Activated T-helper 2 cell treated with anti-CD3 and anti-CD28 coated beads, Interferon-gamma antibody, Interleukin-2, Interleukin-4, amounts not matched to agents 10 μg/mL and 5 μg/mL and 100 μg/mL, durations not matched to agents 14 hours and 24 hours and 36 hours (primary cell): ENCODE measurements at regions of chr10 and their contacts with region 1.

Region 1: DNA sequence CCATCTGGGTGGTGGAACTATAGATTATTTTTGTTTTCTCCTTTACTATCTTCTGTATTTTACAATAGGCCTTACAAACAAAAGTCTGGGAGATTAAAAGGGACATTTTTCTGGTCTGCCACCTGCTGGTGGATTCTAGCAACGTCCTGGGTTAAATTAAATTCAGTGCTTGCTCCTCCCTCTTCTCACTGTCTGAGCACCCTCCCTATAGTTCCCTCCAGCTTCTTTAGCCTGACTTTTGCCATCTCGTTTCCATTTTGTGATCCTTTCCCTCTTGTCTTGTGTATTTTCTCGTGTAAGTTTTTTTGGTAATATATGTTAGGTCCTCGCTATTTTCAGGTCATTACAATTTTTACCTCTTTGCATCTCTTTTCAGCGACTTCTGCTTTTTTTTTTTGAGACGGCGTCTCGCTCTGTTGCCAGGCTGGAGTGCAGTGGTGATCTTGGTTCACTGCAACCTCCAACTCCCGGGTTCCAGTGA is 16.1 kb downstream of the ANKRD16 start:
- DNase-seq: peak; percentile 55
- H3K4me3 Mint-ChIP-seq: no peak overlapping the region
- H3K27ac Mint-ChIP-seq: peak overlapping the region; percentile 4
- H3K4me1 Mint-ChIP-seq: peaks cover 11% of the 10 kb centered on the region
- H3K27me3 Mint-ChIP-seq: no peaks in the 10 kb centered on the region

Region 2: GRCh38 chr10:5629303-5630111 is 244.0 kb before region 1 on chr10:
- intact Hi-C with region 1: loop called (anchors 1 kb)
- DNase-seq: peak; percentile 79
- H3K4me3 Mint-ChIP-seq: no peak overlapping the region
- H3K27ac Mint-ChIP-seq: peak overlapping the region; percentile 83
- H3K4me1 Mint-ChIP-seq: peaks cover 19% of the 10 kb centered on the region
- H3K27me3 Mint-ChIP-seq: peaks cover 2% of the 10 kb centered on the region

Region 3: GRCh38 chr10:5684318-5684970 is 189.1 kb before region 1 on chr10 and contains the start of gene TASOR2:
- intact Hi-C with region 1: loop called (anchors 5 kb)
- DNase-seq: peak; percentile 96
- H3K4me3 Mint-ChIP-seq: peak within 1 kb of the TSS; percentile 96
- H3K27ac Mint-ChIP-seq: peak within 1 kb of the TSS; percentile 97
- H3K4me1 Mint-ChIP-seq: peaks cover 51% of the 10 kb centered on the region
- H3K27me3 Mint-ChIP-seq: peaks cover 9% of the 10 kb centered on the region
- total RNA-seq, gene TASOR2: 60.1 and 68.7 TPM in 2 replicates